ENCODE measurements at regions of chr11 and their contacts with region 1.

Region 1: GRCh38 chr11:65569973-65570918 is at the start of gene ZNRD2:
- DNase-seq: peak; percentile 99
- H3K4me3 ChIP-seq: peak within 1 kb of the TSS; percentile 94
- H3K27ac ChIP-seq: peak within 1 kb of the TSS; percentile 71
- H3K4me1 ChIP-seq: peaks cover 62% of the 10 kb centered on the region
- CTCF ChIP-seq: peak; percentile 69
- total RNA-seq, gene ZNRD2: 37.7 and 60.4 TPM in 2 replicates

Region 2: DNA sequence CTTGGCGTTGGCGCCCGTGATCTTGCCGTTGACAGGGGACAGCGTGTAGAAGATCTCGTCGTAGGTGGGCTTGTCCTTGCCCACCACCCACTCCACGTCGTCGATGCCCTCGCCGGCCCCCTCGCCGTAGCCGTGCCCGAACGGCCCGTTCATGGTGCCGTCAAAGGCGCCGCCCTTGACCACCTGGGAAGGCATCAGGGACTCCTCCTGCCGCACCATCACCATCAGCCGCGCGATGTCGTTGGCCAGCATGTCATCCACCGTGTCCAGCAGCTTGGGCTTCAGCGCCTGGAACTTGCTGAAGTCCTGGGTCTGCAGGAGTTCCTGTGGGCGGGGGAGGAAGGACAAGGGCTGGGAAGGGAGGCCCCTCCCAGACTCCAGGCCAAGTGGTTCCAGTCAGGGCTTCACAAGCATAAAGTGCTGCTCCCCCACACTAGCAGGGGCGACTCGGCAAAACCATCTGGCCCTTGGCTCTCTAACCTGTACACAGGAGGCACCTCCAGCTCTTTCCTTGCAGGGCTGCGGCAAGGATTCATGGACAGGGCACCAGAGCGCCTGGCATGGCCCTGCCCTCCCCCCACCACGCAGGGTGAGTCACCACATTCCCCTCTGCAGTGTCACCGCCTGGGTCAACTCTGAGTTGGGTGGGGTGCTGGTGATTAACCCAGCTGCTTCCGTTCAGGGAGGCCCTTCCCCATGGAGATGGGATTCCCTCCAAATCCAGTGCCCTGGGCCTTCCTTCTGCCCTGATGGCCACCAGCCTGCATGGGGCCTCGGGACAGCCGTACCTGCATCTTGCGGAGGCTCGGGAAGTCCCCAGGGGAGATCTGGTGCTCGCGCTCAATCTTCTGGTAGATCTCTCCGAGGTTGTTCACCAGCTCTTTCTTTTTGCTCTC is 715.5 kb before region 1 on chr11:
- CTCF ChIA-PET with region 1: no interaction called
- POLR2A ChIA-PET with region 1: no interaction called
- intact Hi-C with region 1: loop called (anchors 10 kb)
- DNase-seq: no peak
- H3K4me3 ChIP-seq: no peak overlapping the region
- H3K27ac ChIP-seq: peak overlapping the region; percentile 92
- H3K4me1 ChIP-seq: peaks cover 90% of the 10 kb centered on the region
- CTCF ChIP-seq: no peak

Region 3: DNA sequence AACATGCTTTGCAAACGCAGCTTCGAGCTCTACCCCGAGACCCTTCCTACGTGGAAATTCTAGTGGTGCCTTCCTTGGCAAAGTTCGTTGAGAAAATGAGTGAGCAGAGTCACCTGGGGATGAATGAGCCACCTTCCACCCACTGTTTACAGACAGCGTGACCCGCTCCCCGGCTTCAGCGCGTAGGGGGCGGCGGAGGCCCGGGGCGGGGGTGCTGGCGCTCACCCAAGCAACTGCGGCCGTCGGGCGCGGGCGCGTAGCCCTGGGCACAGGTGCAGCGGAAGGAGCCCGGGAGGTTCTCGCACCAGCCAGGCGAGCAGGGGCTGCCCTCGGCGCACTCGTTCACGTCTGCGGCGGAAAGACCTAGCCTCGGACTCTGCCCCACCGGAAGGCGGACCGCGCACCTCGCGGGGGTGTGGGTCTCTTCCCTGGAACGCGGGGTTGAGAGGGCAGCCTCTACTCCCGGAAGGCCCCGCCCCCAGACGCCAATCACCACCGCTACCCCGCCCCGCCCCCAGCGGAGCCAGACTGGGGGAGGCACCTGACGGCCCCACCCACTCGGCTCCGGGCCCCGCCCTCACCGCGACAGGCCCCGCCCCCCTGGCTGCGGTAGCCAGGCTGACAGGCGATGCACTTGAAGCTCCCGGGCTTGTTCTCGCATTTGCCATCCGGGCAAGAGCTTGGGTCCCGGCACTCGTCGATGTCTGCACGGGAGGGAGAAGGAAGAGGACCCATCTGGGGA is 23.9 kb before region 1 on chr11:
- CTCF ChIA-PET with region 1: interaction called, 3 read pairs
- POLR2A ChIA-PET with region 1: interaction called, 4 read pairs
- intact Hi-C with region 1: loop called (anchors 1 kb)
- DNase-seq: peak; percentile 95
- H3K4me3 ChIP-seq: peak overlapping the region; percentile 65
- H3K27ac ChIP-seq: peak overlapping the region; percentile 84
- H3K4me1 ChIP-seq: peaks cover 48% of the 10 kb centered on the region
- CTCF ChIP-seq: no peak

Region 4: DNA sequence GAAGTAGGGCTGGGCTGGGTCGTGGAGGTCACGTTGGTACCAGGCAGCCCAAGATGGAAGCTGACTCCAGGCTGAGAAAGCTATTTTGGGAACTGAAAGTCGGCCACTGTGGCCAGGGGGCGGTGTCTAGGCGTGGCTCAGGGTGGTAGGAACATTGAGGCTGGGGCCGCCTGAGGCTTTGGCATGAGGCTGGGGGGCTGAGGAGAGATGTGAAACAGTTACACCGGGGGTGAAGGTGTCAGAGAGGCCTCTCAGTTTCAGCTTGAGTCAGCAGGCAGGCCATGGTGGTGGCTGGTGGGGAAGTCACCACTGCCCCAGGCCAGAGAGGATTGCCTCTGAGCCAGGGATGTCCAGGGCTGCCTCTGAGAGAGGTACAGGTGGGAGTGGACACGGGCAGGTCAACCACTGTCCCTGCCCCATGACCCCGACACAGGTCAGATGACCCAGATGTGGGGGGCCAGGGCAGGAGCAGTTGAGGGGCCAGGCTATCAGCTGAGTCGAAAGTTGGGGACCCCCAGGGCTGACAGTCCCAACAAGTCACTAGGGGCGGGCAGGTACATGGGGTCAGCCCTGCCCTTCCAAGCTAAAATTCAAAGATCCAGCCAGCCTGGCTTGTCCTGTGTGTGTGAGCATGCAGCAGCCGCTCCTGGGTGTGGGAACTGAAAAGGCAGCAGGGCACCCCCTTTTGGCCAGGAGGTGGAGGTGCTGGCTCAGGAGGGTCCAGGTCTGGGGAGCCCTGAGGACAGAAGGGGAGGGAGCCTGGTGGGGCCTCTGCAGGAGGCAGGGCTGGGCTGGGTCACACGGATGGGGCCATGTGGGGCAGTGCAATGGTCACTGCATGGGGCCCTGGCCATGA is 18.2 kb after region 1 on chr11:
- CTCF ChIA-PET with region 1: interaction called, 4 read pairs
- POLR2A ChIA-PET with region 1: interaction called, 3 read pairs
- intact Hi-C with region 1: loop called (anchors 1 kb)
- DNase-seq: peak; percentile 84
- H3K4me3 ChIP-seq: peak overlapping the region; percentile 37
- H3K27ac ChIP-seq: peak overlapping the region; percentile 74
- H3K4me1 ChIP-seq: peaks cover 36% of the 10 kb centered on the region
- CTCF ChIP-seq: peak; percentile 83

Region 5: DNA sequence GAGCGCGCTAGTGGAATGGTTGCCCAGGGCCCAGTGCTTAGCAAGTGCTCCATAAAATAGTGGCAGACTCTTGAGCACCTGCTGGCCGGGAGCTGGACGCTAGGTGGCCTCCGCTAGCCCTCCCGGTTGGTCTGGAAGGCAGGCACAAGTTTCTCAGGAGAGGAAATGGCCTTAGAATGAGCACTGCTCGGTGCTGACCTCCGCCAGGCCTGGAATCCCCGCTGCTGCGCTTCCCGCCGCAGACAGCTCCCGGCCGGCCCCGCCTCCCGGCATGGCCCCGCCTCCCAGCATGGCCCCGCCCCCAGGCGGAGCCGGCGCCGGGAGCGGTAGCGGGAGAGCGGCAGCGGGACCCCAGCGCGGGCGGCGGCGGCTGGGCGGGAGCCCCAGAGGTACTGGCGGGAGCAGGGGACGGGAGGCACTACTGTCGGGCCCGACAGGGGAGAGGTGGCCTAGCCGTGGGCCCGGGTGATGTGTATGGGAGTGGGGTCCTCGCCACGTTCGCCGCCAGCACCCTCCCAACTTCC is 67.6 kb after region 1 on chr11 and contains the start of gene SIPA1:
- CTCF ChIA-PET with region 1: no interaction called
- POLR2A ChIA-PET with region 1: no interaction called
- intact Hi-C with region 1: loop called (anchors 2 kb)
- DNase-seq: peak; percentile 75
- H3K4me3 ChIP-seq: peak within 1 kb of the TSS; percentile 90
- H3K27ac ChIP-seq: peak within 1 kb of the TSS; percentile 95
- H3K4me1 ChIP-seq: peaks cover 51% of the 10 kb centered on the region
- CTCF ChIP-seq: no peak
- total RNA-seq, gene SIPA1: 57.6 and 95.4 TPM in 2 replicates